Panc1 (cell line): ENCODE measurements at regions of chr11 and their contacts with region 1.

Region 1: GRCh38 chr11:95212609-95213008 is 18.4 kb downstream of the SESN3 start:
- DNase-seq: no peak
- ATAC-seq: no peak
- H3K4me3 ChIP-seq: no peak overlapping the region
- H3K27ac ChIP-seq: no peak overlapping the region
- H3K4me1 ChIP-seq: no peaks in the 10 kb centered on the region
- H3K27me3 ChIP-seq: no peaks in the 10 kb centered on the region
- CTCF ChIP-seq: no peak

Region 2: DNA sequence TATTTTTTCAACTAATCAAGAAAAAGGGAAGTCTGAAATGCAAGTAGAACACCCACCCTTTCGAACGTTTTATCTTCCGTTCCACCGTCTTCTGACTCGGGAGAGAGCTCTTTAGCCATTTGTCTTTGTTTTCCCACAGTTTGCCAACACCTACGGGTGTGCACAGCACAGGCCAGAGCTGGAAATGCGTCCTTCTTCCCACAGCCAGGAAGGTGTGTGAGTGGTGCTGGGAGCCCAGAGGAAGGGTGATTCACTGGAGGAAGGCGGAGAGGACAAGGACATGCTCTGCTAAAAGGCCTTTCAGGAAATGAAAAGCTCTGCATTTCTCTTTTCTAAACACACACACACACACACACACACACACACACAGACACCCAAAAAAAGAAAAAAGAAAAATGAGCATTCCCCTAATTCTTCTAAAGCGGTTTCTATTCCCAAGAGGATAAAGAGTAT is 104.4 kb before region 1 on chr11:
- CTCF ChIA-PET with region 1: no interaction called
- POLR2A ChIA-PET with region 1: interaction called, 13 read pairs
- in situ Hi-C with region 1: no loop called
- intact Hi-C with region 1: no loop called
- DNase-seq: no peak
- ATAC-seq: 0 out of 2 replicates have a peak, but pooled peaks have one; percentile 56
- H3K4me3 ChIP-seq: no peak overlapping the region; a peak in 1 of 4 replicates
- H3K27ac ChIP-seq: peak overlapping the region; percentile 24; the same call in 1 of the 2 replicates
- H3K4me1 ChIP-seq: peaks cover 5% of the 10 kb centered on the region; the same call in 1 of the 2 replicates
- H3K27me3 ChIP-seq: no peaks in the 10 kb centered on the region
- CTCF ChIP-seq: no peak

Region 3: DNA sequence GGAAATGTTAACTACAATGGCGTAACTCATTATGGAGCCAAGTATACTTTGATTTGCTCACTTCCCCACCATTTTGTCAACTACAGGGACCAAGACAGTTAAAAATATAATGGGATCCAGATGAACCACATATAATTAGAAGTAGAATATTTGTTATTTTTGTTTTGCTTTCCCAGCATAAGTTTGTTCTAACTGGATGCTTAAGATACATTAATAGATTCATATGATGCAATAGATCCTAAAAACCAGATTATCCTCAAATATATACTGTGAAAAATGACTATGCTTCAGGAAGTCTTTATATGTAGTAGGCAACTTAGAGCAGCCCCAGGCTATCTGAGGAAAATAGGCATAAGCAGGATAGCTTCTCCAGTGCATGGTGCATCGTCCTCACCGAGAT is 19.9 kb before region 1 on chr11:
- CTCF ChIA-PET with region 1: no interaction called
- POLR2A ChIA-PET with region 1: no interaction called
- in situ Hi-C with region 1: no loop called
- intact Hi-C with region 1: no loop called
- DNase-seq: no peak
- ATAC-seq: no peak
- H3K4me3 ChIP-seq: no peak overlapping the region
- H3K27ac ChIP-seq: no peak overlapping the region
- H3K4me1 ChIP-seq: no peaks in the 10 kb centered on the region
- H3K27me3 ChIP-seq: peaks cover 13% of the 10 kb centered on the region
- CTCF ChIP-seq: no peak

Region 4: DNA sequence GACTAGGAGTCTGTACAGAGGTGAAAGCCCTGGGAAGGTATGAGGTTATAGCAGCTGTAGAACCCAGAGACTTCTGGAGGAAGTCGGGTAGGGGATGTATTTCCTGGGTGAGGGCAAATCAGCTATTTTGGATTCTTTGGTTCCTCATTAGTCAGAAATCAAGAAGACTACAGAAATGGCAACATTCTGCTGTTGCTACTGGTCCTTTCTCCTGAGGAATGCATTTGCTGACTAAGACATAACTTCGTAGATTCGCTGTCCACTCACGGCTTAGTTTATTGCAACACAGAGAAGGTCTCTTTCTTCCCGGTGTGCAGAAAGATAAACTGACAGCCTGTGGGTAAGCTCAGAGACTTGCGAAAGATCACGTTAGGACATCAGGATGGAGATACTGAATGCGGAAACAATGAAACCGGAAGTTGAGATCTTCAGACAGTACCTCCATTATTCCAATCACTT is 43.7 kb after region 1 on chr11:
- CTCF ChIA-PET with region 1: no interaction called
- POLR2A ChIA-PET with region 1: no interaction called
- in situ Hi-C with region 1: no loop called
- intact Hi-C with region 1: no loop called
- DNase-seq: no peak
- ATAC-seq: no peak
- H3K4me3 ChIP-seq: no peak overlapping the region
- H3K27ac ChIP-seq: no peak overlapping the region
- H3K4me1 ChIP-seq: no peaks in the 10 kb centered on the region
- H3K27me3 ChIP-seq: peaks cover 22% of the 10 kb centered on the region
- CTCF ChIP-seq: no peak

Region 5: GRCh38 chr11:95453616-95454171 is 241.1 kb after region 1 on chr11:
- CTCF ChIA-PET with region 1: no interaction called
- POLR2A ChIA-PET with region 1: no interaction called
- in situ Hi-C with region 1: no loop called
- intact Hi-C with region 1: no loop called
- DNase-seq: no peak
- ATAC-seq: no peak
- H3K4me3 ChIP-seq: no peak overlapping the region
- H3K27ac ChIP-seq: no peak overlapping the region
- H3K4me1 ChIP-seq: no peaks in the 10 kb centered on the region
- H3K27me3 ChIP-seq: no peaks in the 10 kb centered on the region
- CTCF ChIP-seq: no peak